WTC11 (cell line): ENCODE measurements at regions of chr3 and their contacts with region 1.

Region 1: GRCh38 chr3:168040607-168041208 is 55.0 kb downstream of the GOLIM4 start:
- DNase-seq: peak; percentile 16
- ATAC-seq: peak; percentile 86
- H3K4me3 Mint-ChIP-seq: no peak overlapping the region
- H3K27ac Mint-ChIP-seq: no peak overlapping the region
- H3K4me1 Mint-ChIP-seq: peaks cover 8% of the 10 kb centered on the region
- H3K27me3 Mint-ChIP-seq: no peaks in the 10 kb centered on the region
- CTCF ChIP-seq: peak; percentile 36; the same call in 1 of the 2 replicates

Region 2: GRCh38 chr3:167929968-167930367 is 110.7 kb before region 1 on chr3:
- CTCF ChIA-PET with region 1: interaction called, 15 read pairs
- POLR2A ChIA-PET with region 1: no interaction called
- DNase-seq: no peak
- ATAC-seq: peak; percentile 66
- H3K4me3 Mint-ChIP-seq: no peak overlapping the region
- H3K27ac Mint-ChIP-seq: peak overlapping the region; percentile 28; the same call in 1 of the 2 replicates
- H3K4me1 Mint-ChIP-seq: peaks cover 13% of the 10 kb centered on the region
- H3K27me3 Mint-ChIP-seq: no peaks in the 10 kb centered on the region
- CTCF ChIP-seq: no peak

Region 3: DNA sequence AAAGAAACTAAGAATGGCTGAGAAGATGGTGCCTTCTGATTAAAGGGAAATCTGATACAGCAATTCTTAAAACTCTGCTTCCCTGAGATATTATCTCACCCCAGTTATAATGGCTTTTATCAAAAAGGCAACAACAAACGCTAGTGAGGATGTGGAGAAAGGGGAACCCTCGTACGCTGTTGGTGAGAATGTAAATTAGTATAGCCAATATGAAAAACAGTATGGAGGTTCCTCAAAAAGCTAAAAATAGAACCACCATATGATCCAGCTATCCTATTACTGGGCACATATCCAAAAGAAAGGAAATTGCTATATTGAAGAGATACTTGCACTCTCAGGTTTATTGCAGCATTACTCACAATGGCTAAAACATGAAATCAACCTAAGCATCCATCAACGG is 10.1 kb before region 1 on chr3:
- CTCF ChIA-PET with region 1: interaction called, 17 read pairs
- POLR2A ChIA-PET with region 1: no interaction called
- DNase-seq: no peak
- ATAC-seq: no peak
- H3K4me3 Mint-ChIP-seq: no peak overlapping the region
- H3K27ac Mint-ChIP-seq: no peak overlapping the region
- H3K4me1 Mint-ChIP-seq: peaks cover 9% of the 10 kb centered on the region
- H3K27me3 Mint-ChIP-seq: no peaks in the 10 kb centered on the region
- CTCF ChIP-seq: no peak